AG04449 (cell line): ENCODE measurements at regions of chr5 and their contacts with region 1.

Region 1: GRCh38 chr5:153496835-153497234 is 6.4 kb downstream of the GRIA1 start:
- DNase-seq: no peak
- H3K4me3 ChIP-seq: no peak overlapping the region
- CTCF ChIP-seq: peak; percentile 64

Region 2: DNA sequence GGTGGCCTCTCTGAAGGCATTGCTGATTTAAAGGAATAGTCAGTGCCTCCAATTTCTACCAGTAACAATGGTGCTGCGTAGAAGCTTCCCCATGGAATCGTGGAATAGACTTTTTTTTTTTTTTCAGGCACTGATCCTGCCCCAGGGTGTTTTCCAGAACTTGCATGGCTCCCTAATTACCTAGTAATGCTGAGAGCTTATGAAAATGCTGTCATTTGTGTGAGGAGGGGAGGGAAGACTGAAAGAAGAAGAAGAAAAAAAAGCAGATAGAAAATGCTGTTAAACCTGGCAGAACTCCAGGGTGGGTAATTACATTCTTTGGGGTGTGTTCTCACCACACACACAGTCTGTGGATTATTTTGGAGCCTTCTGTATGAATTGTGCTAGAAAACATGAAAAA is 11.2 kb before region 1 on chr5:
- CTCF ChIA-PET with region 1: interaction called, 21 read pairs
- POLR2A ChIA-PET with region 1: no interaction called
- DNase-seq: no peak
- H3K4me3 ChIP-seq: no peak overlapping the region
- CTCF ChIP-seq: no peak

Region 3: GRCh38 chr5:153711755-153712154 is 214.9 kb after region 1 on chr5:
- CTCF ChIA-PET with region 1: interaction called, 16 read pairs
- POLR2A ChIA-PET with region 1: no interaction called
- DNase-seq: no peak
- H3K4me3 ChIP-seq: no peak overlapping the region
- CTCF ChIP-seq: no peak

Region 4: DNA sequence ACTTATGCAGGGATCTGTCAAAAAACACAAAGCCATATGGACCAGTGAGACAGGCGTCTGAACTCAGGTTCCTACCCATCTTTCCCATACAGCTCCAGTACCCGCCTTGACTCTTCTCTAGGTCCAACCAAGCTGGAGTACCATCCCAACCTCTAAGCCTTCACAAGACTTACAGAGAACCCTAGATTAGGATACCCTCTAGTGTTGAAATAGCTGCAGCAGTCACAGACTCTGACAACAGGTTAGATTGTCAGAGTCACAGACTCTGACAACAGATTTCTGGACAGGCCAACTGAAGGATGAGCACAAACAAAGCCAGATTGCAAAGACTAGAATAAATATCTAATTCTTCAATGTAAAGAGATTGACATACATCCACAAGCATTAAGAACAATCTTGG is 259.7 kb after region 1 on chr5:
- CTCF ChIA-PET with region 1: interaction called, 11 read pairs
- POLR2A ChIA-PET with region 1: no interaction called
- DNase-seq: no peak
- H3K4me3 ChIP-seq: no peak overlapping the region
- CTCF ChIP-seq: no peak

Region 5: GRCh38 chr5:153905219-153905618 is 408.4 kb after region 1 on chr5:
- CTCF ChIA-PET with region 1: interaction called, 10 read pairs
- POLR2A ChIA-PET with region 1: no interaction called
- DNase-seq: no peak
- H3K4me3 ChIP-seq: no peak overlapping the region
- CTCF ChIP-seq: peak; percentile 12

Region 6: GRCh38 chr5:153959134-153959957 is 462.5 kb after region 1 on chr5:
- CTCF ChIA-PET with region 1: interaction called, 78 read pairs
- POLR2A ChIA-PET with region 1: interaction called, 3 read pairs
- DNase-seq: peak; percentile 61
- H3K4me3 ChIP-seq: no peak overlapping the region
- CTCF ChIP-seq: no peak